Esophagus squamous epithelium (tissue), 5 donors: ENCODE measurements at regions of chr1 and their contacts with region 1.

Region 1: DNA sequence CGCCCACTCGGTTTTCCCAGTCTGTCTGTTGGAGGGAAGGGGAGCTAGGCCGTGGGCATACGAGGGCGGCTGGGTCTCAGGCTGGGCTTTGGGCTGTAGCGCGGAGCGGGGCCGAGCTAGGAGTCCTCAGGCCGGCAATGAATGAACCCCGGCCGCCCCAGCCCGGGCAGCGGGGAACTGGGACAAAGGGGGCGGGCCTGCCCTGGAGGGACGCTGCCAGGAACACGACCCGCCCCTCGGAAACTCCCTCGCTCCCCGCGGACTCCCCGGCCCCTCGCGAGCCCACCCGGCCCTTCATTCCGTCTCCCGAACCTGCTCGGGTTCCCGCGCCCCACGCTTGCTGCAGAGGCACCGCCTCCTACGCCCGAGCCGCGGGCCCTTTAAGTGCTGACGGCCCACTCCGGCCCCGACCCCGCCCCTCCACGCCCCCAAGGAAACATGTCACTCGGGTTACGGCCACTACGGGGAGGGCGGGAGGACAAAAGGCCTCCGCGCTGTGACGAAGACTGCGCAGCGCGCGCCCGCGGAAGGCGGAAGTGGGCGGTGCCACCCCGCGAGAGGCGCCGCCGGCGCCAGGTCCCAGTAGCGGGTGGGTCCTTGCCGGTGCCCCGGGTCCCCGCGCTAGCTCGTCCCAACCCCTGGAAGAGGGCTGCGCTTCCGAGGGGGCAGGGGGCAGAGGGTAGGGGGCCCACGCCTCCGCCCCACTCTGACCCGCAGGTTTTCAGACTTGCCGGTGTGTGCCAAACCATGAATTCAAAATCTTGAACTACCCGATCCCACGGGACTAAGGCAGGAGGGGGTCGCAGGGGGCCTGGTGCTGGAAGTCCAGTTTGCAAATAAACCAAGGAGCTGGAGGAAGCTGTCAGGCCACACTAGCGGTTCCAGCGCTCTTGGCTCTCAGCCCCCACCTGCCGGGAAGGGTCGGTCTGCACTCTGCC is at the start of gene GALE:
- DNase-seq: peak; percentile 89
- H3K4me3 ChIP-seq: peak within 1 kb of the TSS; percentile 66 to 90 (median 85)
- H3K27ac ChIP-seq: peak within 1 kb of the TSS; percentile 92 to 97 (median 96)
- H3K4me1 ChIP-seq: peaks cover 20 to 53% (median 24%) of the 10 kb centered on the region in 3 donors
- H3K27me3 ChIP-seq: no peaks in the 10 kb centered on the region
- CTCF ChIP-seq: no peak
- POLR2A ChIP-seq: peak in 3 of 4 donors; percentile 53 to 79 (median 57)
- total RNA-seq, gene GALE: 55.1 to 81.0 (median 60.4) TPM

Region 2: DNA sequence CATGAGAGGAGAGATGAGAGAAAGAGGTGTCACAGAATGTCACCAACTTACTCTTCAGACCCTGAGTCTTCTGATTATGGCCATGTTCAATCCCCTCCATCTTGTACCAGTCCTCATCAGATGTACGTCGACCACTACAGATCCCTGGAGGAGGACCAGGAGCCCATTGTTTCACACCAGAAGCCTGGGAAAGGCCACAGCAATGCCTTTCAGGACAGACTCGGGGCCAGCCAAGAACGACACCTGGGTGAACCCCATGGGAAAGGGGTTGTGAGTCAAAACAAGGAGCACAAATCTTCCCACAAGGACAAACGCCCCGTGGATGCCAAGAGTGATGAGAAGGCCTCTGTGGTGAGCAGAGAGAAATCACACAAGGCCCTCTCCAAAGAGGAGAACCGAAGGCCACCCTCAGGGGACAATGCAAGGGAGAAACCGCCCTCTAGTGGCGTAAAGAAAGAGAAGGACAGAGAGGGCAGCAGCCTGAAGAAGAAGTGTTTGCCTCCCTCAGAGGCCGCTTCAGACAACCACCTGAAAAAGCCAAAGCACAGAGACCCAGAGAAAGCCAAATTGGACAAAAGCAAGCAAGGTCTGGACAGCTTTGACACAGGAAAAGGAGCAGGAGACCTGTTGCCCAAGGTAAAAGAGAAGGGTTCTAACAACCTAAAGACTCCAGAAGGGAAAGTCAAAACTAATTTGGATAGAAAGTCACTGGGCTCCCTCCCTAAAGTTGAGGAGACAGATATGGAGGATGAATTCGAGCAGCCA is 49.4 kb before region 1 on chr1:
- intact Hi-C with region 1: no loop called
- DNase-seq: no peak
- H3K4me3 ChIP-seq: no peak overlapping the region
- H3K27ac ChIP-seq: no peak overlapping the region
- H3K4me1 ChIP-seq: peaks cover 0 to 27% (median 6%) of the 10 kb centered on the region in 3 donors
- H3K27me3 ChIP-seq: no peaks in the 10 kb centered on the region
- CTCF ChIP-seq: peak; percentile 6 to 57 (median 40)
- POLR2A ChIP-seq: no peak

Region 3: GRCh38 chr1:23867953-23868556 is 67.4 kb after region 1 on chr1 and contains the start of gene FUCA1:
- intact Hi-C with region 1: loop called (anchors 10 kb)
- DNase-seq: peak; percentile 65
- H3K4me3 ChIP-seq: peak within 1 kb of the TSS; percentile 73 to 89 (median 82)
- H3K27ac ChIP-seq: peak within 1 kb of the TSS; percentile 79 to 83 (median 82)
- H3K4me1 ChIP-seq: peaks cover 11 to 35% (median 14%) of the 10 kb centered on the region in 3 donors
- H3K27me3 ChIP-seq: no peaks in the 10 kb centered on the region
- CTCF ChIP-seq: peak; percentile 94 to 98 (median 96)
- POLR2A ChIP-seq: peak in 3 of 4 donors; percentile 22 to 68 (median 59)
- total RNA-seq, gene FUCA1: 10.1 to 32.2 (median 17.5) TPM